G401 (cell line): ENCODE measurements at regions of chr1 and their contacts with region 1.

Region 1: DNA sequence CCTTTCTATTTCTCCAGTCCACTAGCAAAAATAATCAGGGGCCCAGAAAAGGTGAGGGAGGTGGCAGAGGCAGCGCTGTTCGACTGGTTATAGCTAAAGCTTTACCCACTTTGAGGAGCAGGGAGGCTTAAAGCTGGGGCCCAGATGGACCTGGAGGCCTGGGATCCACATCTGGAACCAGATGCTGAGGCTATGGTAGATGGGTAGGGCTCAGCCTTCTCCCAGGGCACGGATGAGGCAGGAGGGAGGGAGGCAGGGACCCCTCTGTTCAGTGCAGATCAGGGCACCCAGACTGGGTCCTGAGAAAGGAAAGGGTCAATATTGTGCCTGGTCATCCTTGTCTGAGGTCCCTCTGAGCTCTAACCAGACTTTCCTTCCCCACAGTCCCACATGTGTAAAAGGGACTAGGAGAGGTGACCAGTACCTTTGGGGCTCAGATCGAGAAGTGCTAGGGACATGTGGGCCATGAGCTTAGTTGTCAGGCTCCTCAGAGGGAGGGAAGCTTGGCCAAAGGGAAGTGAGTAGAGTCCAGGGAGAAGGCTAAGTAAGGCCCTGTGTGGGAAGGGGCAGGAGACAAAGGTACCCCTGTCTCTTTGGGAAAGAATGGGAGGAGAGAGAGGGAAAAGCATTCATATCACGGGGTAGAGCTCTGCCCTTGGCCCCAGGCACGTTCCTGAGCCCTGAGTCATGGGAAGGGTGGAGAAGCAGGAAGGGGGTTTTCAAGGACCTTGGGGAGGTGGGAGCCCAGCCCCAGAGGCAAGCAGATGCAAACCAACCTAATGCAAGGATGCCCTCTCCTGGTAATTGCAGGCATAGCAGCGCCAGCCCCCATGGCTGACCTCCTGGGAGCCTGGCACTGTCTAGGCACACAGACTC is 15.4 kb downstream of the LMNA start:
- DNase-seq: peak; percentile 73

Region 2: GRCh38 chr1:155940531-155940992 is 189.4 kb before region 1 on chr1:
- in situ Hi-C with region 1: loop called (anchors 10 kb)
- DNase-seq: peak; percentile 67

Region 3: GRCh38 chr1:156226116-156226538 is 96.2 kb after region 1 on chr1:
- in situ Hi-C with region 1: loop called (anchors 10 kb)
- DNase-seq: no peak